WTC11 (cell line): ENCODE measurements at regions of chr13 and their contacts with region 1.

Region 1: DNA sequence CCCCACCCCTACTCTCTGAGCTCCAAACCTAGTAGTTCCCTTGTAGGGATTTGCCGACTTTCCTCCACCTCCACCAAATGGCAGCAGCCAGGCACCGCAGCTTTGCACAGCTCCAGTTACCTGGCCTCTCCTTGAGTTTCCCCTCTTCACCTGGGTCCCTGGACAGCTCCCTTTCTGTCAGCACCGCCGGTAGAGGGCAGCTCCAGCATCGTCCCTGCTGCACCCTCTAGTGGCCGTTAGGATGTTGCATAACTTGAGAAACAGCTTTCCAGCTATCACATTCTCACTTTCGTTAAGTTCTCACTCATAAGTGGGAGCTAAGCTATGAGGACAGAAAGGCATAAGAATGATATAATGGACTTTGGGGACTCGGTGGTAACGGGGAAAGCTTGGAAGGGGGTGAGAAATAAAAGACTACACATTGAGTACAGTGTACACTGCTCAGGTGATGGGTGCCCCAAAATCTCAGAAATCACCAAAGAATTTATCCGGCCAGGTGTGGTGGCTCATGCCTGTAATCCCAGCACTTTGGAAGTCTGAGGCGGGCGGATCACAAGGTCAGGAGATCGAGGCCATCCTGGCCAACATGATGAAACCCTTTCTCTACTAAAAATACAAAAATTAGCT is 60.4 kb upstream of the OLFM4 start:
- DNase-seq: peak; percentile 92
- ATAC-seq: peak; percentile 100
- H3K4me3 Mint-ChIP-seq: no peak overlapping the region
- H3K27ac Mint-ChIP-seq: no peak overlapping the region
- H3K4me1 Mint-ChIP-seq: no peaks in the 10 kb centered on the region; the same call in 1 of the 2 replicates
- H3K27me3 Mint-ChIP-seq: peaks cover 4% of the 10 kb centered on the region; the same call in 1 of the 2 replicates
- CTCF ChIP-seq: peak; percentile 84

Region 2: DNA sequence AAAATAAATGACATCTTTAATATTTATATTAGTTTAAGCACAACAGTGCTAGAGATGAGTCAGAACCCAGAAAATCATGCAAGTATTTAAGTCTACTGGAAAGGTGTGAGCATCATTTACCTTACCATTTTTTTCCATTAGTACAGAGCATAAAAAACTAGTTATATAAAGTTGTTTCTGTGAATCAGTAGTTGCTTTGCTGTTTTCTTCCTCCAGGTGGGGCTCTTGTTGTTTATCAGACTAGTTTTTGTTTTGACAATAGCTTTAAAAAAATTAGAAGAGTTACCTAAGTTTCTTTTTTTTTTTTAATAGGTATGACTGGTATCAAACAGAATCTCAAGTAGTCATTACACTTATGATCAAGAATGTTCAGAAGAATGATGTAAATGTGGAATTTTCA is 302.9 kb before region 1 on chr13:
- CTCF ChIA-PET with region 1: interaction called, 14 read pairs
- POLR2A ChIA-PET with region 1: no interaction called
- DNase-seq: no peak
- ATAC-seq: no peak
- H3K4me3 Mint-ChIP-seq: no peak overlapping the region
- H3K27ac Mint-ChIP-seq: no peak overlapping the region
- H3K4me1 Mint-ChIP-seq: peaks cover 2% of the 10 kb centered on the region; the same call in 1 of the 2 replicates
- H3K27me3 Mint-ChIP-seq: no peaks in the 10 kb centered on the region
- CTCF ChIP-seq: no peak

Region 3: DNA sequence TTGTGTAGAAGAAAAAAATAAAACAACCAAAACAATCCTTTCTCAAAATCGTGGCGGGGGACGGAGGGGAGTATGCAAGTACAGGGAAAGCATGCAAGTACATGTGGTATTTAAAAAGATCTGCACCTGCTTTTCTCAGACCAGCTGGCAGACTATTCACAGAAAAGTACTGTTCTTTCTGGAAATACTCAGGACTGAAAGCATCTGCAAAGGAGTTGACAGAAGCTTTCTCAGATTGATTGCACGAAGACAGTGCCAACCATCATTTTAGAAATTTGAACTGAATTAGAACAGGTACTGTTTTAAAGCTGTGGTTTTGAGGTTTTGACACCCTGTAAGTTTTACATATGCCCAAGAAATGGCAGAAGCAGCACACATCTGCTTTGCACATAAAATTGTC is 100.0 kb before region 1 on chr13:
- CTCF ChIA-PET with region 1: interaction called, 41 read pairs
- POLR2A ChIA-PET with region 1: no interaction called
- DNase-seq: no peak
- ATAC-seq: no peak
- H3K4me3 Mint-ChIP-seq: no peak overlapping the region
- H3K27ac Mint-ChIP-seq: no peak overlapping the region
- H3K4me1 Mint-ChIP-seq: peaks cover 15% of the 10 kb centered on the region
- H3K27me3 Mint-ChIP-seq: peaks cover 63% of the 10 kb centered on the region
- CTCF ChIP-seq: no peak

Region 4: GRCh38 chr13:52916486-52916990 is 51.6 kb before region 1 on chr13:
- CTCF ChIA-PET with region 1: interaction called, 10 read pairs
- POLR2A ChIA-PET with region 1: no interaction called
- DNase-seq: no peak
- ATAC-seq: no peak
- H3K4me3 Mint-ChIP-seq: no peak overlapping the region
- H3K27ac Mint-ChIP-seq: no peak overlapping the region
- H3K4me1 Mint-ChIP-seq: no peaks in the 10 kb centered on the region
- H3K27me3 Mint-ChIP-seq: peaks cover 15% of the 10 kb centered on the region
- CTCF ChIP-seq: no peak

Region 5: GRCh38 chr13:52955472-52955874 is 12.7 kb before region 1 on chr13:
- CTCF ChIA-PET with region 1: interaction called, 109 read pairs
- POLR2A ChIA-PET with region 1: interaction called, 3 read pairs
- DNase-seq: peak; percentile 53
- ATAC-seq: peak; percentile 88
- H3K4me3 Mint-ChIP-seq: peak overlapping the region; percentile 47
- H3K27ac Mint-ChIP-seq: peak overlapping the region; percentile 84
- H3K4me1 Mint-ChIP-seq: peaks cover 68% of the 10 kb centered on the region
- H3K27me3 Mint-ChIP-seq: peaks cover 41% of the 10 kb centered on the region
- CTCF ChIP-seq: no peak

Region 6: GRCh38 chr13:53052675-53053074 is 84.5 kb after region 1 on chr13:
- CTCF ChIA-PET with region 1: no interaction called
- POLR2A ChIA-PET with region 1: no interaction called
- DNase-seq: no peak
- ATAC-seq: no peak
- H3K4me3 Mint-ChIP-seq: no peak overlapping the region
- H3K27ac Mint-ChIP-seq: no peak overlapping the region
- H3K4me1 Mint-ChIP-seq: peaks cover 7% of the 10 kb centered on the region
- H3K27me3 Mint-ChIP-seq: no peaks in the 10 kb centered on the region
- CTCF ChIP-seq: no peak

Region 7: GRCh38 chr13:53068585-53069520 is 100.7 kb after region 1 on chr13:
- CTCF ChIA-PET with region 1: interaction called, 20 read pairs
- POLR2A ChIA-PET with region 1: no interaction called
- DNase-seq: no peak
- ATAC-seq: peak; percentile 56
- H3K4me3 Mint-ChIP-seq: no peak overlapping the region
- H3K27ac Mint-ChIP-seq: no peak overlapping the region
- H3K4me1 Mint-ChIP-seq: peaks cover 13% of the 10 kb centered on the region
- H3K27me3 Mint-ChIP-seq: no peaks in the 10 kb centered on the region
- CTCF ChIP-seq: no peak

Region 8: DNA sequence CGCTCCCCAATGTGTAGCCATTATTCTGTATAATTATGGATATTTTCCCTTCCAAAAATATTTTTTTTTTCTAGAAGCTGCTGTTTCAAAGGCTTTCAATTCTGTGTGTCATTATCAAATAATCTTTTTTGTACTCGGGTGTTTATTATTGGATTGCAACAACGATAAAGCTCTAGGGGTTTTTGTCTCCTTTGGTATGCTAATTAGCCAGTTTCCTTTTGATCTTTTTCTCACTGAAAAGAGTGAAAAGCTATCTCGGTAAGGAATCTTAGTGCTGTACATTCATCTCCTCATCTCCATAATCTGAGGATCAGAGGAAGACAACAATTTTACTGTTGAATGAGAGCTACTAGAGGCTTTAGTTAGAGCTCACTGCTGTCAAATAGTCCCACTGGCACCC is 197.1 kb after region 1 on chr13:
- CTCF ChIA-PET with region 1: interaction called, 10 read pairs
- POLR2A ChIA-PET with region 1: no interaction called
- DNase-seq: no peak
- ATAC-seq: no peak
- H3K4me3 Mint-ChIP-seq: no peak overlapping the region
- H3K27ac Mint-ChIP-seq: no peak overlapping the region
- H3K4me1 Mint-ChIP-seq: peaks cover 32% of the 10 kb centered on the region
- H3K27me3 Mint-ChIP-seq: peaks cover 30% of the 10 kb centered on the region
- CTCF ChIP-seq: no peak

Region 9: DNA sequence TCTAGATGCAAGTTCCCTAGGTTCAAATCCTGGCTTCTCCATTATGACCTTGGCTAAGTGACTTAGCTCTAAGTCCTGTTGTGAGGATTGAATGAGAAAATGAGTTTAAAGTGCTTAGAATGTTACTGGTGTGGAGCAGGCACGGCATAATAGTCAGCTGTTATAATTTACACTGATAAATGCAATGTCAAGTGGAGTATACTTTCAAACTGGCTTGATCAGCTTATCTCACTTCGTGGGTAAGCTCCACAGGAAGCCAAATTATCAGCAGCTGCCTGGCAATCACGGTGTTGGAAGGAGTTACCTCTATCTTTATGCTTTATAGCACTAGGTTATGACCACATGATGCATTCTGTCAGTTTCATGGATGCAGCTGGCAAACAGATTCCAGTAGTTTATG is 333.3 kb after region 1 on chr13:
- CTCF ChIA-PET with region 1: no interaction called
- POLR2A ChIA-PET with region 1: no interaction called
- DNase-seq: no peak
- ATAC-seq: no peak
- H3K4me3 Mint-ChIP-seq: no peak overlapping the region
- H3K27ac Mint-ChIP-seq: no peak overlapping the region
- H3K4me1 Mint-ChIP-seq: peaks cover 5% of the 10 kb centered on the region
- H3K27me3 Mint-ChIP-seq: peaks cover 19% of the 10 kb centered on the region
- CTCF ChIP-seq: no peak